ENCODE measurements at regions of chr10 and their contacts with region 1.

Region 1: GRCh38 chr10:71319042-71319799 is at the start of gene SLC29A3:
- DNase-seq: peak; percentile 57 to 65
- ATAC-seq: peak; percentile 88 to 89
- H3K4me3 ChIP-seq: peak within 1 kb of the TSS; percentile 64 to 83 (median 68)
- H3K27ac ChIP-seq: peak within 1 kb of the TSS; percentile 70 to 76 (median 73)
- H3K4me1 ChIP-seq: peaks cover 0 to 9% of the 10 kb centered on the region in 2 donors
- H3K27me3 ChIP-seq: no peaks in the 10 kb centered on the region
- CTCF ChIP-seq: peak; percentile 50 to 75 (median 55)
- POLR2A ChIP-seq: peak; percentile 62 to 77
- total RNA-seq, gene SLC29A3: 0.36 to 2.8 (median 2.0) TPM

Region 2: GRCh38 chr10:71333129-71333887 is 14.1 kb after region 1 on chr10:
- in situ Hi-C with region 1: no loop called
- intact Hi-C with region 1: no loop called
- DNase-seq: peak in 1 of 2 donors; percentile 28
- ATAC-seq: no peak
- H3K4me3 ChIP-seq: no peak overlapping the region
- H3K27ac ChIP-seq: no peak overlapping the region
- H3K4me1 ChIP-seq: no peaks in the 10 kb centered on the region
- H3K27me3 ChIP-seq: no peaks in the 10 kb centered on the region
- CTCF ChIP-seq: no peak
- POLR2A ChIP-seq: no peak

Region 3: GRCh38 chr10:71475243-71475871 is 156.1 kb after region 1 on chr10:
- in situ Hi-C with region 1: no loop called
- intact Hi-C with region 1: loop called (anchors 5 kb)
- DNase-seq: no peak
- ATAC-seq: no peak
- H3K4me3 ChIP-seq: no peak overlapping the region
- H3K27ac ChIP-seq: peak overlapping the region in 1 of 4 donors; percentile 74
- H3K4me1 ChIP-seq: peaks cover 42 to 67% of the 10 kb centered on the region in 2 donors
- H3K27me3 ChIP-seq: no peaks in the 10 kb centered on the region
- CTCF ChIP-seq: no peak
- POLR2A ChIP-seq: no peak

Region 4: DNA sequence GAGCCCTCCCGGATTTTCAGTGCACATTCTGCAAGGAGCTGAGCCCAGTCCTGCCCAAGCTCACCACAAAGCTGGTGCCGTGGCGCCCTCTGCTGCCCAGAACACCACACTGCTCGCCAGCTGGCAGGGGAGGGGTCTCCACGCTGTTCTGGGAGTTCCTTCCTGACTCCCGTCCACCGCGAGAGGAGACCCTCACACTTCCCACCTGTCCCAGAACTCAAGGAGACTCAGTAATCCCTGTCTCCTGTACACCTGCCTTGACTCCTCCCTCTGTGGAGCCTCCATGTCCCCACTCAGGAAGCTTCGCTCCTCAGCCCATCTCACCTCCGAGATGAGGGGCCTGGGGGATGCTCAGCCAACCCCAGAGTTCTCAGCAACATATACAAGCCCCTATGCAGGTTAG is 389.1 kb after region 1 on chr10:
- in situ Hi-C with region 1: loop called in 2 of 4 experiments (anchors 10 kb)
- intact Hi-C with region 1: loop called (anchors 5 kb)
- DNase-seq: no peak
- ATAC-seq: no peak
- H3K4me3 ChIP-seq: no peak overlapping the region
- H3K27ac ChIP-seq: no peak overlapping the region
- H3K4me1 ChIP-seq: peaks cover 11 to 14% of the 10 kb centered on the region in 2 donors
- H3K27me3 ChIP-seq: no peaks in the 10 kb centered on the region
- CTCF ChIP-seq: peak; percentile 71 to 84 (median 75)
- POLR2A ChIP-seq: no peak

Region 5: DNA sequence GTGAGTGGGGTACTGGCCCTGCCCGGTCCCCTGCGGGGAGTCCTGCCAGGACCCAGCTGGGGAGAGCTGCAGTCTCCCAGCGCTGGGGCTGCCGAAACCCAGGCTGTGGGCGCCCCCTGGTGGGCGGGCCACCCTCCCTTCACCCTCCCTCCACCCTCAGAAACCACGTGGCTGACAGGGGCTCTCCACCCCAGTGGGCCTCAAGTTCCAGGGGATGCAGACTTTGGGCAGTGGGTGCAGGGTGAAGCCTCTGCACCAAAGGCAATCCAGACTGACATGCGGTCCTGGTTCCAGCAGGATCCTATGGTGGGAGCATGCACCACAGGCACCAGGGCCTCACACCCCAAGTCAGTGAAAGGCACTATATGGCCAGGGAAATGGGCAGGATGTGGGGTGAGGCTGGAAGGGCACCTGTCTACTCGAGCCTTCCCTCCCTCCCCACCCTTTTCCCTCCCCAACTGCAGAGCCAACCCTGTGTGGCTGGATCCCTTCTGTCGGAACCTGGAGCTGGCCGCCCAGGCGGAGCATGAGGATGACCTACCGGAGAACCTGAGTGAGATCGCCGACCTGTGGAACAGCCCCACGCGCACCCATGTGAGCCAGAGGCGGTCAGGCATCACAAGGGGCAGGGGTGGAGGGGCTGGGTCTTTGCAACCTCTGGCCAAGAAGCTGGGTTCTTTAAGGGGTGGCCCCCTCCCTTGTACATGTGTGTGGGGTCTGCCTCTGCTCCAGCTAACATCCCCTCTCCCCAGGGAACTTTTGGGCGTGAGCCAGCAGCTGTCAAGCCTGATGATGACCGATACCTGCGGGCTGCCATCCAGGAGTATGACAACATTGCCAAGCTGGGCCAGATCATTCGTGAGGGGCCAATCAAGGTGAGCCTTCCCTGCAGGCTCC is 493.0 kb after region 1 on chr10:
- in situ Hi-C with region 1: loop called in 2 of 4 experiments (anchors 10 to 25 kb)
- intact Hi-C with region 1: loop called (anchors 5 kb)
- DNase-seq: peak in 1 of 2 donors; percentile 56
- ATAC-seq: peak; percentile 57 to 67
- H3K4me3 ChIP-seq: no peak overlapping the region
- H3K27ac ChIP-seq: no peak overlapping the region
- H3K4me1 ChIP-seq: peaks cover 0 to 12% of the 10 kb centered on the region in 2 donors
- H3K27me3 ChIP-seq: no peaks in the 10 kb centered on the region
- CTCF ChIP-seq: peak; percentile 79 to 90 (median 85)
- POLR2A ChIP-seq: no peak